ENCODE measurements at regions of chr19 and their contacts with region 1.

Region 1: GRCh38 chr19:48674921-48675824 is 2.4 kb upstream of the NTN5 start:
- DNase-seq: peak; percentile 72
- ATAC-seq: peak; percentile 99
- H3K4me3 ChIP-seq: no peak overlapping the region
- H3K27ac ChIP-seq: no peak overlapping the region
- H3K4me1 ChIP-seq: no peaks in the 10 kb centered on the region
- H3K27me3 ChIP-seq: peaks cover 9% of the 10 kb centered on the region; the same call in 1 of the 2 replicates
- CTCF ChIP-seq: peak; percentile 83
- POLR2A ChIP-seq: no peak
- RAD21 ChIP-seq: peak; percentile 76

Region 2: DNA sequence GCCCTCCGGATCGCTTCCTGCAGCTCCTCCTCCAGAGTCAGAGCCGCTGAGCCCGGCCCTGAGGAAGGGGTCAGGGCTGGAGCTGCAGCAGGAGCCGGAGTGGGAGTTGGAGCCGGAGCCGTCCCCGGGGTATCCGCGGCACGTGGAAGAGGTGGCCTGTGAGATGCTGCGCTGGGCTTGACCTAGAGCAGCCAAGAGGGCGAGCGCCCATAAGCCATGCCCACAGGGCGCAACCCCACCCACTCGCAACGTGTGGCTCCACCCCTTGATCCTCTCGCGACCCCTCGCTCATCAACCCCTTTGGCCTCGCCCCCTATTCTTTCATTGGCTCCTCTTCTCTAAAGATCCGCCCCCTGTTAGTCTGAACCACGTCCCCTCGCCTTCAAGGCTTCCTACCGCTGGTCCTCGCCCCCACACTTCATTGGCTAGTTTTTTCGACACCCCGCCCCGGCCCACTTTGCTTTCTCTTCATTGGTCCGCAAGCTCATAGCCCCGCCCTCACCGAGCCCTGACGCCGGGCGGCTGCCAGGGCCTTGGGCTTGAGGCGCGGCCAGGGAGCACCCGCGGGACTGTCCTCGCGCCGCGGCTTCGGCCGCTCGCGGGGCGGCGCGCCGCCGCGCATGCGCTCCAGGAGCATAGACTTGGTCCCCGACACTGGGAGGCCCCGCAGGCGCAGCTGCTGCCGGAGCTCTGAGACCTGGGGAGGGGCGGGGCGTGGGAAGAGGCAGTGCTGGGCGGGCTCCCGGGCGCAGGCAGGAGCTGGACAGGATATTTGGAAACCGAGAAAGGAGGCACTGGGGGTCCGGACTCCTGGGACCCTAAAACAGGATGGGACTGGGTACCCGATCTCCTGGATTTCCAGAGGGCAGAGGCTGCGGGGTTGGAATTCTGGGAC is 38.9 kb after region 1 on chr19:
- CTCF ChIA-PET with region 1: interaction called, 3 read pairs
- POLR2A ChIA-PET with region 1: no interaction called
- dilution Hi-C with region 1: no loop called
- in situ Hi-C with region 1: no loop called
- intact Hi-C with region 1: loop called (anchors 2 kb)
- DNase-seq: peak; percentile 98
- ATAC-seq: peak; percentile 93
- H3K4me3 ChIP-seq: peak overlapping the region; percentile 61
- H3K27ac ChIP-seq: peak overlapping the region; percentile 86
- H3K4me1 ChIP-seq: peaks cover 15% of the 10 kb centered on the region
- H3K27me3 ChIP-seq: no peaks in the 10 kb centered on the region
- CTCF ChIP-seq: no peak
- POLR2A ChIP-seq: no peak
- RAD21 ChIP-seq: no peak

Region 3: GRCh38 chr19:48780631-48781391 is 105.6 kb after region 1 on chr19:
- CTCF ChIA-PET with region 1: no interaction called
- POLR2A ChIA-PET with region 1: no interaction called
- dilution Hi-C with region 1: no loop called
- in situ Hi-C with region 1: no loop called
- intact Hi-C with region 1: loop called (anchors 5 kb)
- DNase-seq: peak; percentile 58
- ATAC-seq: peak; percentile 55
- H3K4me3 ChIP-seq: no peak overlapping the region
- H3K27ac ChIP-seq: no peak overlapping the region; the same call in 1 of the 2 replicates
- H3K4me1 ChIP-seq: peaks cover 5% of the 10 kb centered on the region
- H3K27me3 ChIP-seq: peaks cover 6% of the 10 kb centered on the region
- CTCF ChIP-seq: no peak
- POLR2A ChIP-seq: no peak
- RAD21 ChIP-seq: no peak

Measured in IMR-90 (cell line).